ENCODE measurements at regions of chr14 and their contacts with region 1.

Region 1: GRCh38 chr14:74612350-74613021 is 449 bp upstream of the LTBP2 start:
- DNase-seq: peak; percentile 72 to 89 (median 85)
- H3K4me3 ChIP-seq: peak overlapping the region; percentile 17 to 72
- H3K4me3 Mint-ChIP-seq: peak overlapping the region; percentile 67 to 81 (median 78)
- H3K27ac ChIP-seq: no peak overlapping the region
- H3K27ac Mint-ChIP-seq: peak overlapping the region in 1 of 7 donors; percentile 42
- H3K4me1 ChIP-seq: peaks cover 31% of the 10 kb centered on the region
- H3K4me1 Mint-ChIP-seq: peaks cover 24 to 47% (median 38%) of the 10 kb centered on the region in 4 donors
- H3K27me3 ChIP-seq: no peaks in the 10 kb centered on the region
- H3K27me3 Mint-ChIP-seq: peaks cover 4 to 5% of the 10 kb centered on the region in 2 donors

Region 2: DNA sequence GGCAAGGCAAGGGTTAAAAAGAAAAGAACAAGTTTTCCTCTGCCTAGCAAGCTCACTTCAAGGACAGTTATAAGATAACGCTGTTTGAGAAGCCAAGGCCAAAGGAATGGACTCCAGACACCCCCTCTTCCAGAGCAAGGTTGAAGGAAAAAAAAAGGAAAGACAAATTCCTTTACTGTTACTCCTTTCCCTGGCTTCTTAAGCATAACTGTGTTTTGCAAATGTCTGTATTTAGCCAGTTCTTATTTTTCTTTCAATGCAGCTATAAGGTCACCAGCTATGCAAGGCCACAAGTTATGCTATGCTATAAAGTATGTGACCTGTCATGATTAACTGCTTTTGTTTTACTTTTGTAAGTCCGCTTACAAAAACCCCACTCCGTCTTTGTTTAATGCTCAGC is 699.2 kb before region 1 on chr14:
- CTCF ChIA-PET with region 1: no interaction called
- POLR2A ChIA-PET with region 1: no interaction called
- intact Hi-C with region 1: no loop called
- DNase-seq: no peak
- H3K4me3 ChIP-seq: no peak overlapping the region
- H3K4me3 Mint-ChIP-seq: no peak overlapping the region
- H3K27ac ChIP-seq: no peak overlapping the region
- H3K27ac Mint-ChIP-seq: no peak overlapping the region
- H3K4me1 ChIP-seq: no peaks in the 10 kb centered on the region
- H3K4me1 Mint-ChIP-seq: peaks cover 0 to 11% (median 7%) of the 10 kb centered on the region in 4 donors
- H3K27me3 ChIP-seq: no peaks in the 10 kb centered on the region
- H3K27me3 Mint-ChIP-seq: no peaks in the 10 kb centered on the region

Region 3: DNA sequence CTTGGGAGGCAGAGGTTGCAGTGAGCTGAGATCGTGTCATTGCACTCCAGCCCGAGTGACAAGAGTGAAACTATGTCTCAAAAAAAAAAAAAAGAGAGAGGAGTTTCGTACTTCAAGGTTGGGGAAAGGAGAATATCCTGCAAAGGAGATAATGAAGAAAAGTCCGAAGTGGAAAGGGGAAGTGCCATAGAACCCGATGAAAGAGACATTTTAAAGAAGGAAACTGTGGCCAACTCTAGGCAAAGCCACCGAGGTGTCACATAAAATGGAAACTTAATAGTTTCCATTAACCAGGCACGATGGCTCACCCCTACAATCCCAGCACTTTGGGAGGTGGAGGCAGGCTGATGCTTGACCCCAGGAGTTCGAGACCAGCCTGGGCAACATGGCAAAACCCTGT is 14.6 kb after region 1 on chr14:
- CTCF ChIA-PET with region 1: interaction called, 21 read pairs
- POLR2A ChIA-PET with region 1: no interaction called
- intact Hi-C with region 1: no loop called
- DNase-seq: no peak
- H3K4me3 ChIP-seq: no peak overlapping the region
- H3K4me3 Mint-ChIP-seq: peak overlapping the region in 1 of 8 donors; percentile 10
- H3K27ac ChIP-seq: no peak overlapping the region
- H3K27ac Mint-ChIP-seq: no peak overlapping the region
- H3K4me1 ChIP-seq: no peaks in the 10 kb centered on the region
- H3K4me1 Mint-ChIP-seq: peaks cover 0 to 2% (median 1%) of the 10 kb centered on the region in 4 donors
- H3K27me3 ChIP-seq: no peaks in the 10 kb centered on the region
- H3K27me3 Mint-ChIP-seq: peaks cover 0 to 2% of the 10 kb centered on the region in 2 donors

Region 4: DNA sequence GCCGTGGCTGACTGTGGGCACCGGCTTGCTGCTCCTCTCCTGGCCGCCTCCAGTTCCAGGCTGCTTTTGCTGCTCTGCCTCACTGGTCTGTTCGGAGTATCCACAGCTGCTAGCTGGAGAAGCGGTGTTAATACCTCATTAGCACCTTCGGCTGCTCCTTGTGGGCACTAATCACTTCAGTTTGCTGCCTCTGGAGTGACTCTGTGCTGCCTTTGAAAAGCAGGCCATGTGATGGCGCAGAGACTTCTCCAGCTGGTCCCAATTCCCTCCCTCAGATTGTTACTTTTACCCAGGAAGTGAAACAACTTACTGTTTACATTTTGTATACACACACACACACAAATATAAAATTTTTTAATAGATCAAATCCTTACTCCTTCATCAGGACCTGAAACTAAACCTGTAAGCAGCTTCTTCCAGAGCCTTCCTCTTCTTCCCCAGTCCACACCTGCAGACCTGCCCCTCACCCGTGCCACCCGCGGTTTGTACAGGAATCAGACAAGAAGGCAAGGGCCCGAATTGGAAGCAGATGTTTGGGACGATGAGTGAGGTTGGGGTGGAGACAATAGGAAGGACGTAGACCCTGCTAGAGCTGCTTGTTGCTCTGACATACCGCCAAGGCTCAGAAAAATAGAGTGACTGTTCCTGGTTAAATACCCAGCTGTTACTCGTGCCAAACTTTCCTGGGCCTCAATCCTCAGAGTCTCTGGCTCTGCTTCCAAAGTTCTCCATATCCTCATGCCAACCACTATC is 41.1 kb after region 1 on chr14:
- CTCF ChIA-PET with region 1: interaction called, 10 read pairs
- POLR2A ChIA-PET with region 1: interaction called, 3 read pairs
- intact Hi-C with region 1: no loop called
- DNase-seq: no peak
- H3K4me3 ChIP-seq: no peak overlapping the region
- H3K4me3 Mint-ChIP-seq: no peak overlapping the region
- H3K27ac ChIP-seq: no peak overlapping the region
- H3K27ac Mint-ChIP-seq: peak overlapping the region in 2 of 7 donors; percentile 2 to 52
- H3K4me1 ChIP-seq: no peaks in the 10 kb centered on the region
- H3K4me1 Mint-ChIP-seq: peaks cover 4 to 16% (median 10%) of the 10 kb centered on the region in 4 donors
- H3K27me3 ChIP-seq: no peaks in the 10 kb centered on the region
- H3K27me3 Mint-ChIP-seq: no peaks in the 10 kb centered on the region

Region 5: DNA sequence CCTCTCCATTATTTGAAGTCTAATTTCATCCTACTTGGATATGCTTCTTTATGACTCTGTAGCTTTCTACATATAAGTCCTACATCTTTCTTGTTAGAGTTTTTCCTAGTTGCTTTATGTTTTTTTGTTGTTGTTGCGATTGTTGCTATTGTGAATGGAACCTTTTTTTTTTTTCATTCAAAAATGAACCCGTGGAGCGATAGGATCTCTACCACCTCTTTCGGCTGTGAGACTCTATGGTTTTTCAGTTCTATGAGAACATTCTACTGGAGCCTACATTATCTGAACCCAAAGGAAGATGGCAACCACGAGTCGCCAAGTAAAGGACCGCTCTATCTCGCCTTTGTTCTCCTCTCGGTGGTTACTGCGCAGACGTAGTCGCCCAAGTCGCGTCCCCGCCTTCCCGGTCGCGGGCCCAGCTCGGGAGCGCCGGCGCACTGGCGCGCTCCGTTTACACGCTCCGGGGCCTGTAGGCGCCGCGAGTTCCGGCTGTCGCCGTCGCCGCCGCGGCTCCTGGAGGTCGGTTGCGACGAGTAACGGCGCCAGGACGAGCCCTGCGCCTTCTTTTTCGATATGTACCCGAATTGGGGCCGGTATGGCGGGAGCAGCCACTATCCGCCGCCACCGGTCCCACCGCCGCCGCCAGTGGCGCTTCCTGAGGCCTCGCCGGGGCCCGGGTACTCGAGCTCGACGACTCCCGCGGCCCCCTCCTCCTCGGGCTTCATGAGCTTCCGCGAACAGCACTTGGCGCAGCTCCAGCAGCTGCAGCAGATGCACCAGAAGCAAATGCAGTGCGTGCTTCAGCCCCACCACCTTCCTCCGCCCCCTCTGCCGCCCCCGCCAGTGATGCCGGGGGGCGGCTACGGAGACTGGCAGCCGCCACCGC is 150.7 kb after region 1 on chr14 and contains the start of gene YLPM1:
- CTCF ChIA-PET with region 1: interaction called, 13 read pairs
- POLR2A ChIA-PET with region 1: interaction called, 16 read pairs
- intact Hi-C with region 1: loop called (anchors 2 kb)
- DNase-seq: peak; percentile 95 to 97 (median 96)
- H3K4me3 ChIP-seq: peak within 1 kb of the TSS; percentile 77
- H3K4me3 Mint-ChIP-seq: peak within 1 kb of the TSS; percentile 87 to 99 (median 91)
- H3K27ac ChIP-seq: peak within 1 kb of the TSS; percentile 93
- H3K27ac Mint-ChIP-seq: peak within 1 kb of the TSS; percentile 92 to 98 (median 95)
- H3K4me1 ChIP-seq: peaks cover 50% of the 10 kb centered on the region
- H3K4me1 Mint-ChIP-seq: peaks cover 33 to 54% (median 44%) of the 10 kb centered on the region in 4 donors
- H3K27me3 ChIP-seq: no peaks in the 10 kb centered on the region
- H3K27me3 Mint-ChIP-seq: no peaks in the 10 kb centered on the region
- total RNA-seq, gene YLPM1: 83.1 to 90.3 TPM

Region 6: DNA sequence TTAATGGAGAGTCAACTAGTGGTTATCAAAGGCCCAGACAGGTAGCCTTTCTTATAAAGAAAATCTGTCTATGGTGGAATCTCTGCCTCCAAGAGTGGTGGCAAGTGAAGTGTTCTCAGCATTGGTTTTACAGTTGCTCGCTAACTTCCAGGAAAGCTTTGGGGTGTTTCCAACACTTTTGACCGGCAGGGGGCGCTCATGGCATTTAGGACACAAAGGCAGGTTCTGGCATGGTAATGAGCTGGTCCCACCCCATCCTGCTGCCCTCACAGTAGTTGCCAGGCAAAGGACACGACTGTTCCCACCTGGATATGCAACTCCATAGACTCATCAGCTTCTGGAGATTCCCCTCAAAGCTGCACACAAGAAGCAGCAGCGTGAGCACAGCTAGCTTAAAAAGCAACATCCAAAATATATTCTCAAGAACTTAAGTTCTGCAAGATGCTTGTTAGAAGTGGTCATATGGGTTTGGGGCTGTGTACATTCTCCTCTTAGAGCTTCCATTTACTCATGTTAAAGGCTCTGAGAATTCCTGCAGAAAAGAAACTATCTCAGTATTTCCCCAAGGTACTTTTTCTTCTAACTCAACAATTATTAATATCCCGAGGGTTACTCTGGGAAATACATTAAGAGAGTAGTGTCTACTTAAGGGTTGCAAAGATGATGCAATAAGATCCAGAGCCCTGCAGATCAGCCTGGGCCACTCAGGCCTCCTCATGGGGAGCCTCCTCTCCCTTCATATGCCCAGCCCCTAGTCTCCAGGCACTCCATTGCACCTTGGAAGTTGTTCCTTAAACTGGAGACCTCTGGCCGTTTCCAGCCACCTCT is 248.6 kb after region 1 on chr14:
- CTCF ChIA-PET with region 1: interaction called, 13 read pairs
- POLR2A ChIA-PET with region 1: no interaction called
- intact Hi-C with region 1: no loop called
- DNase-seq: peak; percentile 79 to 85 (median 85)
- H3K4me3 ChIP-seq: no peak overlapping the region
- H3K4me3 Mint-ChIP-seq: no peak overlapping the region
- H3K27ac ChIP-seq: no peak overlapping the region
- H3K27ac Mint-ChIP-seq: peak overlapping the region in 1 of 7 donors; percentile 25
- H3K4me1 ChIP-seq: peaks cover 6% of the 10 kb centered on the region
- H3K4me1 Mint-ChIP-seq: peaks cover 3 to 9% (median 4%) of the 10 kb centered on the region in 4 donors
- H3K27me3 ChIP-seq: no peaks in the 10 kb centered on the region
- H3K27me3 Mint-ChIP-seq: no peaks in the 10 kb centered on the region

Region 7: GRCh38 chr14:75660630-75661494 is 1048.4 kb after region 1 on chr14 and contains the starts of genes ERG28 and TTLL5:
- CTCF ChIA-PET with region 1: no interaction called
- POLR2A ChIA-PET with region 1: no interaction called
- intact Hi-C with region 1: loop called (anchors 10 kb)
- DNase-seq: peak; percentile 97 to 99 (median 98)
- H3K4me3 ChIP-seq: peak within 1 kb of the TSS; percentile 92 to 95
- H3K4me3 Mint-ChIP-seq: peak within 1 kb of the TSS; percentile 93 to 99 (median 96)
- H3K27ac ChIP-seq: peak within 1 kb of the TSS; percentile 88
- H3K27ac Mint-ChIP-seq: peak within 1 kb of the TSS; percentile 96 to 99 (median 98)
- H3K4me1 ChIP-seq: peaks cover 20% of the 10 kb centered on the region
- H3K4me1 Mint-ChIP-seq: peaks cover 12 to 44% (median 28%) of the 10 kb centered on the region in 4 donors
- H3K27me3 ChIP-seq: no peaks in the 10 kb centered on the region
- H3K27me3 Mint-ChIP-seq: no peaks in the 10 kb centered on the region
- total RNA-seq, gene ERG28: 12.9 to 13.9 TPM
- total RNA-seq, gene TTLL5: 25.3 to 28.2 TPM

Measured in CD4-positive, alpha-beta memory T cell (primary cell).